ENCODE measurements at regions of chr6 and their contacts with region 1.

Region 1: DNA sequence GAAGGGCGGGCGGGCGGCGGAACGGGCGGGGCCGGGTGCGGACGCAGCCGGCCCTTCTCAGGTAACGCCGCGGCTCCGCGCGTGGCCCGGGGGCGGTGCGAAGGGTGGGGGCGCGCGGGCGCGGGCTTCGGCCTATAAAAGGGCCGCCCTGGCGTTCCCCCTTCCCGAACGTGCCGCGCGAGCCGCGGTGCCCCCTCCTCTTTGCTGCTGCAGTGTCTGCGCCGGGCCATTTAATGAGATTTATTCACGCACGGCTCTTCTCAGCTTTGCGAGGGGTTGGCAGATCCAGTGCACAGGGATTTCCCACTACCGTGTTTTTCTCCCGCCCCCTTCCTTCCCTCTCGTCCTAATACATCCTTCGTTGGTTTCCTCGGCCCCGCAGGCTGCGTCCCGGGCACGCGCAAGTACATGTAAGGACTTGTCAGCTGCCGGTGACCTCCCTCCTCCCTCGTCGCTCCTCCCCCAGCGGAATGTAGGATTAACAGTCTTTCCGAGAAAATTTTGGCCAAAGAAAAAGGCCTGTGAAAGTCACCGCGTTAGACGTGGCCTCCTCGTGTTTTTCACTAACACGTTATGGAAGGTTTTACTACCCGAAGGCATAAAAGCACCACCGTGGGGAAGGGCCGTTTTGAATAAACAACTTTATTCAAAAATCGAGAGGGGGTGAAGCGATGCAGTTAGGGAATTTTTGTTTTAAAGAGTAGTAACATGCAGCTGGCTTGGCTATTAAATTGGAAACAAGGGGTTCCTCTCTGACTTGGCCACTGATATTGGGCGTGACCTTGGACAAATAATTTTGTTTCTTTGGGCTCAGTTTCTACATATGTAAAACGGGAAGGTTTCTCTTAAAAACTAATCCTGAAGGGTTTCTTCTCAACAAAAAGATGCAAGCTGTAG is 966 bp upstream of the REV3L start:
- DNase-seq: peak; percentile 85
- ATAC-seq: peak; percentile 67
- H3K4me3 Mint-ChIP-seq: peak overlapping the region; percentile 97
- H3K27ac Mint-ChIP-seq: peak overlapping the region; percentile 99
- H3K4me1 Mint-ChIP-seq: peaks cover 37% of the 10 kb centered on the region
- H3K27me3 Mint-ChIP-seq: no peaks in the 10 kb centered on the region
- CTCF ChIP-seq: no peak

Region 2: GRCh38 chr6:109690737-109691621 is 1793.0 kb before region 1 on chr6 and contains the starts of genes AK9 and FIG4:
- CTCF ChIA-PET with region 1: no interaction called
- POLR2A ChIA-PET with region 1: no interaction called
- intact Hi-C with region 1: loop called (anchors 2 kb)
- DNase-seq: peak; percentile 88
- ATAC-seq: peak; percentile 93
- H3K4me3 Mint-ChIP-seq: peak within 1 kb of the TSS; percentile 94
- H3K27ac Mint-ChIP-seq: peak within 1 kb of the TSS; percentile 95
- H3K4me1 Mint-ChIP-seq: peaks cover 42% of the 10 kb centered on the region
- H3K27me3 Mint-ChIP-seq: no peaks in the 10 kb centered on the region
- CTCF ChIP-seq: no peak
- total RNA-seq, gene AK9: 9.1 and 10.6 TPM in 2 replicates
- total RNA-seq, gene FIG4: 19.8 and 21.8 TPM in 2 replicates

Region 3: DNA sequence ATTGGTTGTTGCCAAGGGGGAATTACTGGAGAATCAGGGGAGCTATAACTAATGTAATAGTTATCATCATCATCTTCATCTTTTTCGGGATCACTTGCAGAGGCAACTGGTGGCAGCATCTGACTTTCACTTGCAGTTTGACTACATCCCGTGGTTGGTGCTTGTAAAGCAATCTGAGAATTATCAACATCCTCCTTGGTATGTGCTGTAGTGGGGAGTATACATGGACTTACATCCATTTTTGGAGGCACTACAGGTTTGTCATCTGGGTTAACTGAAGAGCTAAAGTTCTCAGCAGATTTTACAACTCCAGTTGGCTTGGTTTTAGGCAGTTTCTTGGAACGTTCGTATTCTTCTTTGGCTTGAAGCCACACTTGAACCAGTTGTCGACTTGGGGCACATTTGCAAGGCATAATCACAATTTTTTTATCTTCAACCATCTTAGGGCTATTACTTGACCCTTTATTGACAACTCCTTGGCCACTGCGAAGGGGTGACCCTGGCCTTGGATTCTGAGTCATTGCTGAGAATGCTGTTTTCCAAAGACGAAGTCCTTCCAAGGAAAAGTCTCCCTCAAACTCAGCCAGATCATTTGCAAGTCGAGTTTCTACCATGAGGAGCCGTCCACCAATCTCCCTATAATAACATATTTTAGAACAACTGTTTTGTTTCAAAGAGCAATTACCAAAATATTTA is 116.4 kb before region 1 on chr6:
- CTCF ChIA-PET with region 1: interaction called, 10 read pairs
- POLR2A ChIA-PET with region 1: interaction called, 10 read pairs
- intact Hi-C with region 1: no loop called
- DNase-seq: no peak
- ATAC-seq: no peak
- H3K4me3 Mint-ChIP-seq: no peak overlapping the region
- H3K27ac Mint-ChIP-seq: no peak overlapping the region
- H3K4me1 Mint-ChIP-seq: no peaks in the 10 kb centered on the region
- H3K27me3 Mint-ChIP-seq: no peaks in the 10 kb centered on the region
- CTCF ChIP-seq: no peak

Region 4: GRCh38 chr6:111411978-111412566 is 71.9 kb before region 1 on chr6:
- CTCF ChIA-PET with region 1: interaction called, 17 read pairs
- POLR2A ChIA-PET with region 1: interaction called, 14 read pairs
- intact Hi-C with region 1: no loop called
- DNase-seq: no peak
- ATAC-seq: peak; percentile 77
- H3K4me3 Mint-ChIP-seq: peak overlapping the region; percentile 29
- H3K27ac Mint-ChIP-seq: peak overlapping the region; percentile 71
- H3K4me1 Mint-ChIP-seq: peaks cover 34% of the 10 kb centered on the region
- H3K27me3 Mint-ChIP-seq: no peaks in the 10 kb centered on the region
- CTCF ChIP-seq: no peak

Region 5: DNA sequence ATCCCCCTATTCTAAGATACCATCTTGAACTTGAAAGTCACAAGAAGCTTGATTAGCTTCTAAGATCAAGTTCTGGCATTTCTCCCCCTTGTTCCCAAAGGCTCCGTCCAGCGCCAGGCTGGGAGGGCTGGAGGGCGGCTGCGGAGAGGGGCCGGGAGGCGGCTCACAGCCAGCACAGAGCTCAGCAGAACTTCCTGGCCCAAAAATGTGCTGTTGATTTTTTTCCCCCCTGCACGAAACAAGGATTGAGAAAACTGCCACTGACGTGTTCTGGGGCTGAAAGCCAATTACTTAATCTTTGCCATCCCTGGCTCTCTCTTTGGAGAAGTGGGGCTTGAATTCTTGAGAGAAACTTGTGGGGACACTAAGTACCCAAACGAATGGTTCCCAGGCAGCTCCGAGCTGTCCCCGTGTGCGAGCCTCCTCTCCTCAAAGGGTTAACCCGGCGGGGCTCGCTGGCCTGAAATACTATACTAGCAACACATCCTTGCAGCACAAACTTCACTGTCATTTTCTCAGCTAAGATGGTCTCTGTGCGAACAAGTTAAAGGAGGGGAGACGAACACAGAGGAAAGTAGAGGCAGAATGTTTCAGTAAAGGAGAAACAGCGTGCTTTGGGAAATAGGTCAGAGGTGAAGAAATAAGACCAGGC is 121.2 kb after region 1 on chr6:
- CTCF ChIA-PET with region 1: interaction called, 3 read pairs
- POLR2A ChIA-PET with region 1: interaction called, 42 read pairs
- intact Hi-C with region 1: loop called (anchors 1 kb)
- DNase-seq: peak; percentile 23
- ATAC-seq: peak; percentile 43
- H3K4me3 Mint-ChIP-seq: peak overlapping the region; percentile 90
- H3K27ac Mint-ChIP-seq: peak overlapping the region; percentile 92
- H3K4me1 Mint-ChIP-seq: peaks cover 44% of the 10 kb centered on the region
- H3K27me3 Mint-ChIP-seq: no peaks in the 10 kb centered on the region
- CTCF ChIP-seq: no peak

Region 6: DNA sequence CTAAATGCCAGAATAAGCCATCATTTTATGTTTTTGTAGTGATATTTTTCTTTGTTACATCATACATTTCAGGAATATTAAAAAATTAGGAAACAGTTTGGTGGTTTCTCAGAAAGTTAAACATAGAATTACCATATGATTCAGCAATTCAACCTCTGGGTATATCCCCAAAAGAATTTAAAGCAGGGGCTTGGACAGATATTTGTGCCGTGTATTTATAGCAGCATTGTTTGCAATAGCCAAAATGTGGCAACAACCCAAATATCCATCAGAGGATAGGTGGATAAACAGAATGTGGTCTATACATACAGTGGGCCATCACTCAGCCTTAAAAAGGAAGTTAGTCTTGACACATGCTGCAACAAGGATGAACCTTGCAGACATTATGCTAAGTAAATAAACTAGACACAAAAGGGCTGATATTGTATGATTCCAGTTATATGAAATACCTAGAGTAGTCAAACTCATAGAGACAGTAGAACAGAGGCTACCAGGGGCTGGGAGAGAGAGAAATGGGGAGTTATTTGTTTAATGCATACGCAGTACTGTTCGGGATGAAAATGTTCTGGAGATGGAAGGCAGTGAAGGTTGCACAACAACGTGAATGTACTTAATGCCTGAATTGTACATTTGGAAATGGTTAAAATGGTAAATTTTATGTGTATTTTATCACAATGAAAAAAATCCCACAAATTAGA is 140.6 kb after region 1 on chr6:
- CTCF ChIA-PET with region 1: no interaction called
- POLR2A ChIA-PET with region 1: no interaction called
- intact Hi-C with region 1: no loop called
- DNase-seq: no peak
- ATAC-seq: no peak
- H3K4me3 Mint-ChIP-seq: no peak overlapping the region
- H3K27ac Mint-ChIP-seq: no peak overlapping the region
- H3K4me1 Mint-ChIP-seq: no peaks in the 10 kb centered on the region
- H3K27me3 Mint-ChIP-seq: peaks cover 9% of the 10 kb centered on the region
- CTCF ChIP-seq: no peak

Region 7: DNA sequence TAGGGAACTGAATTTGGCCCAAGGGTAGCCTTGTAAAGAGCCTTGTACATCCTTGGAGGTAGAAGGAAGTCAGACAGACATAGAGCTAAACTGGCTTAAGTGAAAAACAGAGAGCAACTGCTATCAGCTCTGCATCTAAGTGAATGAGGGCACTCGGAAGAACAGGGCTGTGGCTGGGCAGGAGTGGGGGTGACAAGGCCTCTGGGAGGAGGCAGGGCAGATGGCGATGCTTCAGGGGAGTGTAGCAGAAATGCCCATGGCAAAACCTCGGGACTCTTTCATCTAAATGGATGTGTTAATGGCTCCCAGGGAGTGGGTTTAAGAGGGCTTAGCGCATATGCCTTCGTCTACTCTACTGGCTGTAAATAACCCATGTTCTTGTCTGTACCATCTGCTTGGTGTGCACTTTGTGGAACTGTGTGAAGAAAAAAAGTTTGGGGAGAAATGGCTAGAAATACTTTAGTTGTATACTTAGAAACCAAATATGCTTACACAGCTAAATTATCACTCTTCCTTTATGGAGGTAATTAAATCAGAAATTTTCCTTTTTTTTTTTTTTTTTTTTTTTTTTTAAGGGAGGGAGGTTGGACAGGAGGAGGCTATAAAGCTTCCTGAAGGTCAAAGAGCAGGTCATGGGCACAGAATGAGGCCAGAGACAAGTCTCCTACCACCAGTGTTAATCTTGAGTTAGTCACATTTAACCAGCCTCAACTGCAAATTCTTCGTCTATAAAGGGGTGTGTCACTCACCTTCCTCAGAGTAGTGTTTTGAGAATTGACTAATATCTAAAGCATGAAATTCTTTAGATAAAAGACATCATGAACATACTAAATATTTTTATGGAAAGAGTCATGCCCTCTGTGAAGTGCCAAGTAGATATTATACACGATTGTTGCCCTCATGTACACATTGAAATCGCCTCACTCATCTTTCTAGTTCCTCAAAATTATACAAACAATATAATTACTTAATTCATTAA is 328.4 kb after region 1 on chr6:
- CTCF ChIA-PET with region 1: no interaction called
- POLR2A ChIA-PET with region 1: no interaction called
- intact Hi-C with region 1: no loop called
- DNase-seq: no peak
- ATAC-seq: no peak
- H3K4me3 Mint-ChIP-seq: no peak overlapping the region
- H3K27ac Mint-ChIP-seq: no peak overlapping the region
- H3K4me1 Mint-ChIP-seq: peaks cover 7% of the 10 kb centered on the region
- H3K27me3 Mint-ChIP-seq: no peaks in the 10 kb centered on the region
- CTCF ChIP-seq: no peak

Region 8: DNA sequence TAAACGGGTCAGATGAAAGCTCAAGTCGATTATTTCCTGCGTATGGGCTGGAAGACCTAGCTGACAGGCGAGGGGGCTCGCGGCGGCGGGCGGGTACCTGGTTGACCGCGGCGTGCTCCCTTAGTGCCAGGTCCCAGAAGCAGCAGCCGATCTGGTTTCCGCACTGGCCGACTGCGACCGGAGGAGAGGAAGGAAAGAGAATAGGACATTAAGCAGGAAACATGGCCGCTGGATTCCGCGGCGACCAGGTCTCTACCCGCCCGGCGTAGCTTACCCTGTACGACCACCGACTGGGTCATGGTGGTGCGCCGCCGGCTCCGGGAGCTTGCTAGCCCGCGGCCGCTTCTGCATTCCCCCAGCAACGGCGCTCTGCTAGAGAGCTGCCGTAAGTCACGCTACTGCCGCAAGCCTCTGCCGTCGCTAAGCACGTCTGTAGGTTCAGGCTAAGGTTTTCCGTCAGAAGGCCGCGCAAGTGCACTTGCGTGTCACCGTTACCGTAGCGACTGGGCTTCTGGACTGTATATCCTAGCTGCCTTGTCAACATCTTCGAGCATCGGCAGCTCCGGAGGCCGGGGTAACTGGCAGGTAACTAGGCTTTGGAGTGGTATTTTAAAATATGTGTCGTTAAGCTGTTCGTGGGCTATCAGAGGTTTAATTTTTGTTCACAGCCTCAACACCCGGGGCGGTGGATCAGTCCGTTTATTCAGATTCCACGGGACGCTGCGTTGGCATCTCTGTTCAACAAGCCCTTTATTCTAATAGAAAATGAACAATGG is 603.3 kb after region 1 on chr6 and contains the starts of genes FAM229B and TUBE1:
- CTCF ChIA-PET with region 1: no interaction called
- POLR2A ChIA-PET with region 1: no interaction called
- intact Hi-C with region 1: loop called (anchors 1 kb)
- DNase-seq: peak; percentile 74
- ATAC-seq: peak; percentile 96
- H3K4me3 Mint-ChIP-seq: no peak within 1 kb of the TSS
- H3K27ac Mint-ChIP-seq: no peak within 1 kb of the TSS
- H3K4me1 Mint-ChIP-seq: no peaks in the 10 kb centered on the region
- H3K27me3 Mint-ChIP-seq: peaks cover 14% of the 10 kb centered on the region
- CTCF ChIP-seq: no peak
- total RNA-seq, gene FAM229B: 2.0 and 2.6 TPM in 2 replicates
- total RNA-seq, gene TUBE1: 24.1 and 28.0 TPM in 2 replicates